HepG2 (cell line): ENCODE measurements at regions of chr9 and their contacts with region 1.

Region 1: GRCh38 chr9:37913480-37914153 is 9.7 kb upstream of the SLC25A51 start:
- DNase-seq: peak; percentile 81
- ATAC-seq: peak; percentile 78
- H3K4me3 ChIP-seq: no peak overlapping the region
- H3K27ac ChIP-seq: no peak overlapping the region
- H3K4me1 ChIP-seq: peaks cover 17% of the 10 kb centered on the region
- H3K27me3 ChIP-seq: no peaks in the 10 kb centered on the region
- CTCF ChIP-seq: peak; percentile 98
- EP300 ChIP-seq: no peak
- POLR2A ChIP-seq: 0 out of 4 replicates have a peak, but pooled peaks of 1 of the 2 experiments have one; percentile 19
- RAD21 ChIP-seq: peak; percentile 91

Region 2: GRCh38 chr9:38008168-38009034 is 94.8 kb after region 1 on chr9:
- CTCF ChIA-PET with region 1: no interaction called
- POLR2A ChIA-PET with region 1: interaction called, 8 read pairs
- in situ Hi-C with region 1: no loop called
- intact Hi-C with region 1: loop called (anchors 1 kb)
- DNase-seq: peak; percentile 76
- ATAC-seq: peak; percentile 94
- H3K4me3 ChIP-seq: peak overlapping the region in 1 of 3 experiments; percentile 15; a peak in 1 of 6 replicates
- H3K27ac ChIP-seq: peak overlapping the region; percentile 69
- H3K4me1 ChIP-seq: peaks cover 51% of the 10 kb centered on the region
- H3K27me3 ChIP-seq: no peaks in the 10 kb centered on the region
- CTCF ChIP-seq: peak; percentile 37; the same call in 1 of the 2 replicates
- EP300 ChIP-seq: peak in 1 of 2 experiments; percentile 14; a peak in 1 of 4 replicates
- POLR2A ChIP-seq: no peak
- RAD21 ChIP-seq: 0 out of 2 replicates have a peak, but pooled peaks have one; percentile 43

Region 3: GRCh38 chr9:38061326-38061977 is 147.8 kb after region 1 on chr9:
- CTCF ChIA-PET with region 1: no interaction called
- POLR2A ChIA-PET with region 1: interaction called, 4 read pairs
- in situ Hi-C with region 1: no loop called
- intact Hi-C with region 1: loop called (anchors 5 kb)
- DNase-seq: no peak
- ATAC-seq: no peak
- H3K4me3 ChIP-seq: no peak overlapping the region; a peak in 1 of 6 replicates
- H3K27ac ChIP-seq: peak overlapping the region; percentile 83
- H3K4me1 ChIP-seq: peaks cover 99% of the 10 kb centered on the region
- H3K27me3 ChIP-seq: no peaks in the 10 kb centered on the region; a peak in 1 of 5 replicates
- CTCF ChIP-seq: no peak
- EP300 ChIP-seq: no peak
- POLR2A ChIP-seq: no peak
- RAD21 ChIP-seq: no peak

Region 4: DNA sequence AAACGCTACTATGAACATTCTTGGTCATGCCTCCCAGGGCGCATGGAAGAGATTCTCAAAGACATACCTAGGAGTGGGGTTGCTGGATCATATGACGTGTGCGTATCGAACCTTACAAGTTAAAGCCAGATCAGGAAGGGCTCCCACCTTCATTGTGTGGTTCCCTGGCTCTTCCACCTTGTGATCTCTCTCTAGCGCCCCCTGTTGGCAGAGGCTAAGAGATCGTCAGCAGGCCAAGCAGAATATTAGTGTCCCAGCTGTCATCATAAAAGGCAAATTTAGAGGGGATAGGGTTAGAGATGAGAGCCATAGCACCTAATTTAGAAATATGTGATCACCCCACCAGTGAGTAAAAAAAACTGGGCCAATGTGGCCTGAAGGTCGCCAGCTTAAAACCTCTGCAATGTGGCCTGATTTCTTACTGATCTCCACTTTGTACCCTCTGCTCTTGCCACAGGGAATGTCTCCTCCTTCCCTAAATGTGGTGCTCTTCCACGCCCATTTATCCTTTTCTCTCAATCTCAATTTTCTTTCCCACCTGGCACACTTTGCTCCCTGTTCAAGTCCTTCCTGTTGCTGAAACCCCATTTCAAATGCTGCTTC is 247.1 kb after region 1 on chr9:
- CTCF ChIA-PET with region 1: interaction called, 19 read pairs
- POLR2A ChIA-PET with region 1: no interaction called
- in situ Hi-C with region 1: loop called (anchors 5 kb)
- intact Hi-C with region 1: loop called (anchors 1 kb)
- DNase-seq: peak; percentile 57
- ATAC-seq: peak; percentile 86
- H3K4me3 ChIP-seq: no peak overlapping the region
- H3K27ac ChIP-seq: no peak overlapping the region
- H3K4me1 ChIP-seq: no peaks in the 10 kb centered on the region
- H3K27me3 ChIP-seq: peaks cover 0 to 11% of the 10 kb centered on the region in 2 experiments; a peak in 2 of 5 replicates
- CTCF ChIP-seq: peak; percentile 84
- EP300 ChIP-seq: no peak
- POLR2A ChIP-seq: no peak
- RAD21 ChIP-seq: peak; percentile 22

Region 5: DNA sequence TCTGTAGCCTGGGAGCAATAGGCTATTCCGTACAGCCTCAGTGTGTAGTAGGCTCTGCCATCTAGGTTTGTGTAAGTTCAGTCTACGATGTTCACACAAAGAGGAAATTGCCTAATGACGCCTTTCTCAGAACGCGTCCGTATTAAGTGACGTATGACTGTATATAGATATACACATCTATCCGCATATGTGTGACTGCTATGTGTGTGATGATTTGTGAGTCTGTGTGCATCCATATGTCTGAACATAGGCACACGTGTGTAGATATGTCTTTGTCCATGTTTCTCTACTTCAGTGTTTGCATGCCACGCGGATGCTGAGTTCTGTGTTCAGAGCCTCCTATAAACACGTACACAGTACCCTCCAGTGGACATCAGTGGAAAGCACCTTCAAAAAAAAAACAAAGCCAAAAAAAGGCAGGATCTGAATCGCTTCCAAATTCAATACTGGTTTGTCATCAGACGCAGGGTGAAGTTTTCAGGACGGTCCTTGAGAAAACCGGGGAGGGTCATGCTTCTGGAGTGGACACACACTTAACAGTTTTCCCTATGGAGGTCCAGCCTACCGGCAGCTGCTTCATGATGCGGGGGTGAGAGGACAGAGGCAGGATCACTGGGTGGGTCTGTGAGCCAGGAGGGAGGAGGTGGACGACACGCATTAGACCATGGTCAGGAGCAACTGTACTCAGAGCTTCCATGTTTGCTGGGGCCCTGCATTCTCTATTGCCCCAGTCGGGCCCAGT is 449.4 kb after region 1 on chr9:
- CTCF ChIA-PET with region 1: no interaction called
- POLR2A ChIA-PET with region 1: no interaction called
- in situ Hi-C with region 1: loop called (anchors 10 kb)
- intact Hi-C with region 1: loop called (anchors 5 kb)
- DNase-seq: peak; percentile 49
- ATAC-seq: peak; percentile 29
- H3K4me3 ChIP-seq: no peak overlapping the region
- H3K27ac ChIP-seq: no peak overlapping the region
- H3K4me1 ChIP-seq: peaks cover 28% of the 10 kb centered on the region
- H3K27me3 ChIP-seq: no peaks in the 10 kb centered on the region
- CTCF ChIP-seq: peak; percentile 81
- EP300 ChIP-seq: no peak
- POLR2A ChIP-seq: no peak
- RAD21 ChIP-seq: 0 out of 2 replicates have a peak, but pooled peaks have one; percentile 41